ENCODE measurements at regions of chr12 and their contacts with region 1.

Region 1: GRCh38 chr12:110600254-110600653 is 13.7 kb upstream of the TCTN1 start:
- DNase-seq: no peak
- H3K4me3 ChIP-seq: no peak overlapping the region
- H3K27ac ChIP-seq: no peak overlapping the region
- H3K4me1 ChIP-seq: peaks cover 2% of the 10 kb centered on the region
- H3K27me3 ChIP-seq: no peaks in the 10 kb centered on the region
- CTCF ChIP-seq: peak in 2 of 3 donors; percentile 66 to 82
- EP300 ChIP-seq: no peak
- POLR2A ChIP-seq: no peak

Region 2: GRCh38 chr12:110449799-110450497 is 150.3 kb before region 1 on chr12 and contains the start of gene ARPC3:
- intact Hi-C with region 1: loop called in 2 of 4 experiments (anchors 5 kb)
- DNase-seq: peak; percentile 93 to 96 (median 95)
- H3K4me3 ChIP-seq: peak within 1 kb of the TSS; percentile 90
- H3K27ac ChIP-seq: peak within 1 kb of the TSS in 1 of 2 donors; percentile 66
- H3K4me1 ChIP-seq: peaks cover 4% of the 10 kb centered on the region
- H3K27me3 ChIP-seq: no peaks in the 10 kb centered on the region
- CTCF ChIP-seq: peak; percentile 82 to 94 (median 89)
- EP300 ChIP-seq: no peak
- POLR2A ChIP-seq: peak; percentile 46
- total RNA-seq, gene ARPC3: 75.9 to 170 (median 92.9) TPM

Region 3: GRCh38 chr12:110468212-110469048 is 131.8 kb before region 1 on chr12 and contains the starts of genes FAM216A and GPN3:
- intact Hi-C with region 1: loop called in 1 of 4 experiments (anchors 5 kb)
- DNase-seq: peak; percentile 95 to 97 (median 96)
- H3K4me3 ChIP-seq: peak within 1 kb of the TSS; percentile 61
- H3K27ac ChIP-seq: peak within 1 kb of the TSS; percentile 73 to 99
- H3K4me1 ChIP-seq: peaks cover 8% of the 10 kb centered on the region
- H3K27me3 ChIP-seq: no peaks in the 10 kb centered on the region
- CTCF ChIP-seq: no peak
- EP300 ChIP-seq: no peak
- POLR2A ChIP-seq: peak; percentile 93
- total RNA-seq, gene FAM216A: 6.5 to 12.3 (median 10.1) TPM
- total RNA-seq, gene GPN3: 15.5 to 32.5 (median 23.2) TPM

Region 4: DNA sequence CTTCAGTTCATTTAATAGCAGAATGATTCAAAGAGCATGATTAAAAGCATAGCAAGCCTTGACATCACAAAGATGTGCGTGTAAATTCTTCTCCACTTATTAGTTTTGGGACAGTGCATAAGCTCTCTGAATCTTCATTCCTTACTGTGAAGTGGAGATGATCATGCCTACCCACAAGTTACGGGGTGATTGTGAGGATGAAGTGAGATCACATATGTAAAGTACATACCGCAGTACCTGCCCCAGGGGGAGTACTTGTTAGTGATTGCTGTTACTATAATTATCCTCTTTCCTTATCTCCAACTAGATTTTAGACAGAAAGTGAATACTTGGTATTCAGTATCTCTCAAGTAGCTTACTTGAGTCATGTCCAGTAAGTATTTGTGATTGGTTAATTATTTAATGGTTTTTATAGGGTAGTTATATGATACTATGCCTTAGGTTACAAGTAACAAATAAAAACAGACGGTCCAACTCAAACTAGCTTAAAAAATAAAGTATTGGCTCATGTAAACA is 92.1 kb before region 1 on chr12:
- intact Hi-C with region 1: loop called in 3 of 4 experiments (anchors 2 to 5 kb)
- DNase-seq: no peak
- H3K4me3 ChIP-seq: no peak overlapping the region
- H3K27ac ChIP-seq: no peak overlapping the region
- H3K4me1 ChIP-seq: no peaks in the 10 kb centered on the region
- H3K27me3 ChIP-seq: no peaks in the 10 kb centered on the region
- CTCF ChIP-seq: no peak
- EP300 ChIP-seq: no peak
- POLR2A ChIP-seq: no peak

Region 5: GRCh38 chr12:110513842-110514241 is 86.4 kb before region 1 on chr12:
- intact Hi-C with region 1: loop called (anchors 2 to 5 kb)
- DNase-seq: no peak
- H3K4me3 ChIP-seq: no peak overlapping the region
- H3K27ac ChIP-seq: no peak overlapping the region
- H3K4me1 ChIP-seq: no peaks in the 10 kb centered on the region
- H3K27me3 ChIP-seq: no peaks in the 10 kb centered on the region
- CTCF ChIP-seq: no peak
- EP300 ChIP-seq: no peak
- POLR2A ChIP-seq: no peak

Region 6: DNA sequence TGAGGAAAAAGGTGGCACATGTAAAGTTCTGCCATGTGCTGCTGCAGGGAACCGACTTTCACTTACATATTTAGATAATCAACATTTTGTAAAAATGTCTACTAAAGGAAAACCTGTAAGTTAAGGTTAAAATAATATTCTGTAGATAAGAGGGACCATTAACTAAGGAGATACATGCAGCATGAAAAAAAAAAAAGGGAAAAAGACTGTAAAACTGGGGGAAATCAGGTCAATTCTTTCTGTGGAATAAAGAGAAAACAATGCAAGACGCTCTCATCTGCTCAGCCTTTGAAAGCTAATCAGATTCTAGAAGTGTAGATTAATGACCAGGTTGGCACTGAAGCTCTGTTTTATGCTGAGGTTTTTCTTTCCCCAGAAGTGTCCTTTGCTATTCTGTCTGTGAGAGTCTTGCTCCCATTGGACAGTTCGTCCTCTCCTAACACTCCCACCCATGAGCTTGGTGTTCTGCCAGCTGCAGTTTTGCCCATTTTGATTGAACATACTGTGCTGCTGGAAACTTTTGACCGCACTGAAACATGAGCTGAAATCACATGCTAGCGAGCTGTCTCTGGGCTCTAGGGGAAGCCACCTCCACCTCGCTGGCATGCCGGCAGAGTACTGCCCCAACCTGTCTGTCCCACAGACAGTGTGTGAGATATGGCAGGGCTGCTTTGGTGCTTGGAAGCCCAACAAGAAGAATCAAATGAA is 56.8 kb before region 1 on chr12:
- intact Hi-C with region 1: loop called in 2 of 4 experiments (anchors 5 to 10 kb)
- DNase-seq: peak; percentile 93 to 96 (median 94)
- H3K4me3 ChIP-seq: no peak overlapping the region
- H3K27ac ChIP-seq: peak overlapping the region; percentile 24 to 74
- H3K4me1 ChIP-seq: peaks cover 7% of the 10 kb centered on the region
- H3K27me3 ChIP-seq: no peaks in the 10 kb centered on the region
- CTCF ChIP-seq: no peak
- EP300 ChIP-seq: no peak
- POLR2A ChIP-seq: no peak

Region 7: DNA sequence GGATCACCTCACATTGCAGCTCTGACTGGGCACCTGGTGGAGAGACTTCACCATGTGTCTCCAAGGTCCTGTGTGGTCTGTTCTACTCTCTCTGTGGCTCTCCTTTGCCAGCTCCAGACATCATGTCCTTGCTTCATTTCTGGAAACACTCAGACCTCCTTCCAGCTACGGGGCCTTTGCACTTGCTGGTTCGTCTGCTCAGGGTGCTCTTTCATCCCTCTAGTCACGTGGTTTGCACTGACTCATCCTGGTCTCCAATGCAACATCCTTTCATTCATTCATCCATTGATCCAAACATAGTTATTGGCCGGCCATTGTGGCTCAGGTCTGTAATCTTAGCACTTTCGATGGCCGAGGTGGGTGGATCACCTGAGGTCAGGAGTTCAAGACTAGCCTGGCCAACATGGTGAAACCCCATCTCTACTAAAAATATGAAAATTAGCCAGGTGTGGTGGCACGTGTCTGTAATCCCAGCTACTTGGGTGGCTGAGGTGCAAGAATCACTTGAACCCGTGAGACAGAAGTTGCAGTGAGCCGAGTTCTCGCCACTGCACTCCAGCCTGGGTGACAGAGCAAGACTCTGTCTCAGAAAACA is 222.7 kb after region 1 on chr12:
- intact Hi-C with region 1: no loop called
- DNase-seq: no peak
- H3K4me3 ChIP-seq: no peak overlapping the region
- H3K27ac ChIP-seq: no peak overlapping the region
- H3K4me1 ChIP-seq: peaks cover 3% of the 10 kb centered on the region
- H3K27me3 ChIP-seq: no peaks in the 10 kb centered on the region
- CTCF ChIP-seq: no peak
- EP300 ChIP-seq: no peak
- POLR2A ChIP-seq: no peak